Esophagus muscularis mucosa (tissue), 4 donors: ENCODE measurements at regions of chr11 and their contacts with region 1.

Region 1: GRCh38 chr11:122781378-122782195 is 56.7 kb upstream of the CRTAM start:
- DNase-seq: peak; percentile 98
- H3K4me3 ChIP-seq: no peak overlapping the region
- H3K27ac ChIP-seq: no peak overlapping the region
- H3K4me1 ChIP-seq: peaks cover 0 to 23% (median 18%) of the 10 kb centered on the region in 4 donors
- H3K27me3 ChIP-seq: no peaks in the 10 kb centered on the region
- CTCF ChIP-seq: peak; percentile 93 to 96 (median 95)
- EP300 ChIP-seq: no peak
- POLR2A ChIP-seq: no peak

Region 2: GRCh38 chr11:122578168-122578825 is 203.3 kb before region 1 on chr11:
- intact Hi-C with region 1: loop called (anchors 2 kb)
- DNase-seq: no peak
- H3K4me3 ChIP-seq: no peak overlapping the region
- H3K27ac ChIP-seq: no peak overlapping the region
- H3K4me1 ChIP-seq: peaks cover 0 to 10% (median 5%) of the 10 kb centered on the region in 4 donors
- H3K27me3 ChIP-seq: no peaks in the 10 kb centered on the region
- CTCF ChIP-seq: no peak
- EP300 ChIP-seq: no peak
- POLR2A ChIP-seq: no peak